A673 (cell line): ENCODE measurements at regions of chr11 and their contacts with region 1.

Region 1: DNA sequence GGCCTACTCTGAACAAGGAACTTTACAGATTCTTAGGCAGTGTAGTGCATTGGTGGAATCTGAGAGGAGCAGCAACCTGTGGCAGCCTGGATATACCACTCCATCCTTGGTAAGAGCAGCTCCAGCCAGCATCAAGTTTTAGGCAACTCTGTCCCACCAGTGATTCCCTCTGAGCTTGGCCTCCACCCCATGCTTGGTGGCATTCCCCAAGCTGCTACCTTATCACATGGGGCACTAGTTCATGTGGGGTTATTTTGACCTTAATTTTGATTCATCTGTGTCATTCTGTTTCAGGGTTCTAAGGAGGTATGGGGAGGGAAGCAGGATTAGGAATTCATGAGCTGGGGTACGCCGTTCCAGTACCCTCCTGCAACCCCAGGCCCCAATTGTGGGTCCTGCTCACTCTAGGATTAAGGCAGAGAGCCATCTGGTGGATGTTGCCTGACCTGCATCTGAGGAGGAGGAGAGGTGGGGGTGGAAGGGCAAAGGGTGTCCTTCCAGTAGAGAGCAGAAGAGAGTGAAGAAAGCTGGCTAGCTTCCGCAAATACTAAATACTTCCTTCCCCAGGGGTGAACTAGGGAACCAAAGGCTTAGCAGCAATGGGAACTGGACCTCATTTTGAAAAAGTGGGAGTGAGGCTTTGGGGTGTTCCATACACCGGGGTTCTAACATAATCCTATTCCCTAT is 10.5 kb downstream of the LRRC51 start:
- DNase-seq: peak; percentile 81
- H3K4me3 ChIP-seq: no peak overlapping the region
- H3K27ac ChIP-seq: no peak overlapping the region
- H3K4me1 ChIP-seq: no peaks in the 10 kb centered on the region
- H3K27me3 ChIP-seq: no peaks in the 10 kb centered on the region
- CTCF ChIP-seq: peak; percentile 91

Region 2: DNA sequence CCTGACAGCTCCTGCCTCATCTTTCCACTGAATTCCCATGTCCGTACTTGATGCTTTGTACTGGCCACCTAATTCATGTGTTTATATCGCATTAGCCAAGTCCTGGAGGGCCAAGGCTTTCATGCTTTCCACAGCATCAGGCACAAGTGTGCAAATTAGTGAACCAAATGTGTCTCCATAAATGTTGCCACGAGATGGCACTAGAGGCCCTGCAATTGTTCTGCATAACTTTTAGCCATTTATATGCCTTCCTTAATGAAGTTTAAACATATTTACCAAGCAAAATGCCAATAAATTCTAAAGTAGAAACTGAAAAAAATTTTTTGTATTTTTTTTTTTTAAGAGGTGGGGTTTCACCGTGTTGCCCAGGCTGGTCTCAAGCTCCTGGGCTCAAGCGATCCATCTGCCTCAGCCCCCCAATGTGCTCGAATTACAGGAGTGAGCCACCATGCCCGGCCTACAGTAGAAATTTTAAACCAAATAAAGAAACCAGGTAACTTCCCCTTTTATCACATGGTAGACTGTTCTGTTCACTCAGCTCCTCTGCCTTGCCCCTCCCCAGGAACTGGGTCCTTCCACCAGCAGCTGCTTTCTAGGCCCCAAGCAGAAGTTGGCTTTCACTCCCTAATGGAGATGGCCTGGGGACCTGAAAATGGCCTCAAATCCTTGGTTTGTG is 113.3 kb before region 1 on chr11:
- CTCF ChIA-PET with region 1: no interaction called
- POLR2A ChIA-PET with region 1: no interaction called
- intact Hi-C with region 1: loop called (anchors 2 kb)
- DNase-seq: peak; percentile 74
- H3K4me3 ChIP-seq: no peak overlapping the region
- H3K27ac ChIP-seq: no peak overlapping the region
- H3K4me1 ChIP-seq: no peaks in the 10 kb centered on the region
- H3K27me3 ChIP-seq: no peaks in the 10 kb centered on the region
- CTCF ChIP-seq: peak; percentile 90

Region 3: GRCh38 chr11:72030472-72031045 is 60.6 kb before region 1 on chr11:
- CTCF ChIA-PET with region 1: interaction called, 59 read pairs
- POLR2A ChIA-PET with region 1: no interaction called
- intact Hi-C with region 1: loop called (anchors 1 kb)
- DNase-seq: no peak
- H3K4me3 ChIP-seq: no peak overlapping the region
- H3K27ac ChIP-seq: no peak overlapping the region
- H3K4me1 ChIP-seq: peaks cover 15% of the 10 kb centered on the region
- H3K27me3 ChIP-seq: no peaks in the 10 kb centered on the region
- CTCF ChIP-seq: no peak